ENCODE measurements at regions of chr1 and their contacts with region 1.

Region 1: GRCh38 chr1:77143529-77144121 is 75.6 kb downstream of the PIGK start:
- DNase-seq: peak in 1 of 3 donors; percentile 1
- H3K4me3 ChIP-seq: no peak overlapping the region
- H3K4me3 Mint-ChIP-seq: no peak overlapping the region
- H3K27ac ChIP-seq: no peak overlapping the region
- H3K27ac Mint-ChIP-seq: no peak overlapping the region
- H3K4me1 ChIP-seq: no peaks in the 10 kb centered on the region
- H3K4me1 Mint-ChIP-seq: no peaks in the 10 kb centered on the region
- H3K27me3 ChIP-seq: no peaks in the 10 kb centered on the region
- H3K27me3 Mint-ChIP-seq: peaks cover 0 to 2% (median 0%) of the 10 kb centered on the region in 3 donors
- CTCF ChIP-seq: peak; percentile 59

Region 2: DNA sequence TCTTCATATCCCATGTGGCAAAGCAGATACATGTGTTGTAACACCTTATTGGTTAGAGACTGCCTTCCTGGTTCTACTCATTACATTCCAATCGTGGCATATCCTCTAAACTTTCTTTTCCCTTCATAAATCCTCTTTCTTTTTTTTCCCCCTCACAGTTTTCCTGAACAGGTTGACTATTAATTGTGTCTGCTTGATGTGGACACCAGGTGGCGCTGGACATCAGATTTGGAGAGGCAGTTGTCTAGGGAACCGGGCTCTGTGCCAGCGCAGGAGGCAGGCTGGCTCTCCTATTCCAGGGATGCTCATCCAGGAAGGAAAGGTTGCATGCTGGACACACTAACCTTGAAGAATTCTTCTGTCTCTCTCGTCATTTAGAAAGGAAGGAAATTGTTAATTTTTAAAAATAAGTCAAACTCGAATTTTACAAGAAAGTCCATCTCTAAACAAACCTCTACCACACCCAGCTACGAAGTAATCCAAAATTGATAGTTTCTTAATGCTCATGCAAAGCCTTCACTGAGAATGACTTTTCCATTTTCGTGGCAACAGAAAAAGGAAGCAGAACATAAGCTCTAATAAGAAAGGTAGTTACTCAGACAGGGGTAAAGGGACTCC is 1152.0 kb before region 1 on chr1:
- intact Hi-C with region 1: loop called (anchors 10 kb)
- DNase-seq: peak; percentile 53 to 68 (median 62)
- H3K4me3 ChIP-seq: no peak overlapping the region
- H3K4me3 Mint-ChIP-seq: no peak overlapping the region
- H3K27ac ChIP-seq: no peak overlapping the region
- H3K27ac Mint-ChIP-seq: no peak overlapping the region
- H3K4me1 ChIP-seq: no peaks in the 10 kb centered on the region
- H3K4me1 Mint-ChIP-seq: no peaks in the 10 kb centered on the region
- H3K27me3 ChIP-seq: no peaks in the 10 kb centered on the region
- H3K27me3 Mint-ChIP-seq: peaks cover 0 to 3% (median 0%) of the 10 kb centered on the region in 3 donors
- CTCF ChIP-seq: peak; percentile 92

Region 3: DNA sequence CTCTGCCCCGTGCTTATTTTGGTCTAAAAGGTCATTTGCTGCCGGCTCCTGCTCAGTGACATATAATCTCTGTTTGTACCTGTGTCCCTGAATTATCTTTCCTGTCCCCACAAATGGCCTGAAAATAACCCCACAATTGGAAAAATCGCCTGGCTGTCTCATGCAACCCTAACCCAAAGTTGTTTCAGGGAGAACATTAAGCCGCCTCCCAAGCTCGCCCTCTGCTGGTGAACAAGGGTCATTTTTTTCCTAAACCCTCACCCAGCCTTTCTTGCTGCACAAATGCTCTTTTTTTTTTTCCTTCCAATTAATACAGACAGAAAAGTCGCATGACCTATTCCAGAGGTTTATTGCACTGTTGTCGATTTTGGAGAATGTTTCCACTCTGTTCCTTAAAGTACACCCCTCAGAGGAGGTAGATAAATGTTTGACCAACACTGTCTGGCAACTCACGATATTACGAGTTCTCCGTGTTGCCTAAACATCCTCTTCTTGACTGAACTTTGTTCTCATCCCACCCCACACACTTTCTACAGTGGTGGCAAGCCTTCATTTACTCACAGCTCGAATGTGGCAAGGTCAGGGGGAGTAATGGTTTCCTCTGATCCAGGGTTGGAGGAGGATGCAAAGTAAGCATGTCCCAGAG is 390.2 kb after region 1 on chr1:
- intact Hi-C with region 1: loop called (anchors 5 kb)
- DNase-seq: peak; percentile 35 to 57 (median 39)
- H3K4me3 ChIP-seq: peak overlapping the region; percentile 19 to 60 (median 39)
- H3K4me3 Mint-ChIP-seq: peak overlapping the region; percentile 62 to 89
- H3K27ac ChIP-seq: no peak overlapping the region
- H3K27ac Mint-ChIP-seq: peak overlapping the region in 6 of 7 donors; percentile 26 to 86 (median 61)
- H3K4me1 ChIP-seq: peaks cover 18 to 22% of the 10 kb centered on the region in 2 donors
- H3K4me1 Mint-ChIP-seq: peaks cover 23% of the 10 kb centered on the region
- H3K27me3 ChIP-seq: no peaks in the 10 kb centered on the region
- H3K27me3 Mint-ChIP-seq: peaks cover 0 to 7% (median 2%) of the 10 kb centered on the region in 3 donors
- CTCF ChIP-seq: peak; percentile 88

Region 4: GRCh38 chr1:77781683-77782082 is 638.1 kb after region 1 on chr1:
- intact Hi-C with region 1: no loop called
- DNase-seq: no peak
- H3K4me3 ChIP-seq: no peak overlapping the region
- H3K4me3 Mint-ChIP-seq: no peak overlapping the region
- H3K27ac ChIP-seq: no peak overlapping the region
- H3K27ac Mint-ChIP-seq: peak overlapping the region in 1 of 7 donors; percentile 0
- H3K4me1 ChIP-seq: peaks cover 8 to 17% of the 10 kb centered on the region in 2 donors
- H3K4me1 Mint-ChIP-seq: peaks cover 23% of the 10 kb centered on the region
- H3K27me3 ChIP-seq: no peaks in the 10 kb centered on the region
- H3K27me3 Mint-ChIP-seq: peaks cover 0 to 4% (median 0%) of the 10 kb centered on the region in 3 donors
- CTCF ChIP-seq: no peak

Measured in CD14-positive monocyte (primary cell).